Left cardiac atrium (tissue), 4 donors: ENCODE measurements at regions of chr2 and their contacts with region 1.

Region 1: GRCh38 chr2:73112913-73113633 is at the start of gene RAB11FIP5:
- DNase-seq: peak; percentile 83
- ATAC-seq: peak; percentile 81 to 89
- total RNA-seq, gene RAB11FIP5: 21.7 to 31.8 TPM

Region 2: GRCh38 chr2:72846538-72847095 is 266.5 kb before region 1 on chr2:
- intact Hi-C with region 1: no loop called
- DNase-seq: no peak
- ATAC-seq: no peak

Region 3: GRCh38 chr2:73071360-73072133 is 41.5 kb before region 1 on chr2 and contains the start of gene SFXN5:
- intact Hi-C with region 1: loop called in 1 of 2 experiments (anchors 2 kb)
- DNase-seq: peak; percentile 98
- ATAC-seq: peak; percentile 97
- total RNA-seq, gene SFXN5: 9.0 to 10.5 TPM